Esophagus muscularis mucosa (tissue), 4 donors: ENCODE measurements at regions of chr6 and their contacts with region 1.

Region 1: GRCh38 chr6:153231048-153231646 is 100.1 kb upstream of the RGS17 start:
- DNase-seq: no peak
- H3K4me3 ChIP-seq: no peak overlapping the region
- H3K27ac ChIP-seq: no peak overlapping the region
- H3K4me1 ChIP-seq: no peaks in the 10 kb centered on the region
- H3K27me3 ChIP-seq: no peaks in the 10 kb centered on the region
- CTCF ChIP-seq: peak; percentile 49 to 68 (median 59)
- EP300 ChIP-seq: no peak
- POLR2A ChIP-seq: no peak

Region 2: DNA sequence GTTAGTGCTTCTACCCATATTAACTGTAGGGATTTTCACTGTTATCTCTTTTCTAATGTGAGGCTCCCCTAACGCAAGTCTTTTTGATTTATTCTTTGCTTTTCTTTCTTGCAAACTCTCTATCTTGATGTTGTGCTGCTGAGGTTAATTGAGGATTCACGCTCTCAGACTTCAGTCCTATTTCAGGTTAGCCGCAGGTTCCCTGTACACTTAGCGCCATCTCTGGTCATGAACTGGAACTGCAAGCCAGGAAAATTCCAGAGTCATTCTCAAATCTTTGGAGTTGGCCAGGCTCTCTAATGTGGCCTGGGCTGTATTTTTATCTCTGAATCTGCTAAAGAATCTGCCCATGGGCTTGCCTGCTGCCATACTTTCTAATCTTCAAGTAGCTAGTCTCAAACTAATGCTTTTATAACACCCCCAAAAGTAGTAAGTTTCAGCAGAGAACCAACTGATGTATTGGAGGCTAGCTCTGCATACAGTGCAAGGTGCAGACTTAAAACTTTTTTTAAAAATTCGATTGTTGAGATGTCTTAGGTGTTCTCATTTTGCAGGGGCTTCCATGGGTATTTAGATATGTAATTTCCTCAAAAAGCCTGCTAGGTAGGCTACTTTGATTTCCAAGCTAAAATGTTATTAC is 716.8 kb after region 1 on chr6:
- intact Hi-C with region 1: loop called (anchors 5 kb)
- DNase-seq: no peak
- H3K4me3 ChIP-seq: no peak overlapping the region
- H3K27ac ChIP-seq: no peak overlapping the region
- H3K4me1 ChIP-seq: no peaks in the 10 kb centered on the region
- H3K27me3 ChIP-seq: no peaks in the 10 kb centered on the region
- CTCF ChIP-seq: peak; percentile 42 to 80 (median 58)
- EP300 ChIP-seq: no peak
- POLR2A ChIP-seq: no peak